ENCODE measurements at regions of chr12 and their contacts with region 1.

Region 1: GRCh38 chr12:96906849-96907670 is at the start of gene NEDD1:
- DNase-seq: peak; percentile 87
- H3K4me3 Mint-ChIP-seq: peak within 1 kb of the TSS; percentile 93
- H3K27ac Mint-ChIP-seq: peak within 1 kb of the TSS; percentile 96
- H3K4me1 Mint-ChIP-seq: peaks cover 39% of the 10 kb centered on the region
- H3K27me3 Mint-ChIP-seq: no peaks in the 10 kb centered on the region
- total RNA-seq, gene NEDD1: 55.4 to 57.9 TPM

Region 2: DNA sequence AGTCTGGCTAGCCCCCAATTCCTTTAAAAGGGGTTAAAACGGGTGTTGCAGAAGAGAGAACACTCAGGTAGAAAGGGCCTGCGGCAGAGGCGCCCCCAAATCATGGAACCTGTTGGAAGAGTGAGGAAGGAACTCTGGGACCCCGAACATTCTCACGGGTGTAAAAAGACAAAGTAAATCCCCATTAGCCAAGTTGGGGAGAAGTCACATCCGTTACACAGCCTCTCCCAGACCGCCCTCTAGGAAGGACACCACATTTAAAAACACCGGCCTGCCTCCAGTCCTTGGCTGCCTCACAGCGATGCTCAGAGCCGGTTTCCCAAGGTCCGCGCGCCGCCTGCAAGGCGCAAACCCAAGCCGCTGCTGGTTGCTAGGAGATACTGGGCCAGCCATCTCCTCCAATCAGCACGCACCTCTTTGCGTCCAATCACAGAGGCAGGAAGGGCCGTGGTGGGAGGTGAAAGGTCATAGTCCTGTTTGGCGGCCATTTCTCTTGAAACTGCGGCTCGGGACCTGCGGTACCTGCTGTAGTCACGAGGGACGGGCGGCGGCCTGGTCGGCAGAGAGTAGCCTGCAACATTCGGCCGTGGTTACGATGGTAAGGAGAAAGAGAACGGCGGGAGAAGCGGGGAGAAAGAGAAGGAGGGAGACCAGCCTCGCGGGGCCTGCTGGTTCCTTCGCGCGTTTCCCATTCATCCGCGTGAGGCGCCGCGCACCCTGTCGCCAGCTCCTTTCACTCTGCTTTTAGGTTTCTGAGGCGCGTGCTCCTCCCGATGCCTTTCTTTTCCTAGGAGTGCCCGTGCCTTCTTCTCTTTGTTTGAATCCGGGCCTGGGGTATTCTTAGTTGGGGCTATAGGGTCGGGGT is 1048.3 kb before region 1 on chr12 and contains the start of gene SNRPF:
- CTCF ChIA-PET with region 1: no interaction called
- POLR2A ChIA-PET with region 1: no interaction called
- intact Hi-C with region 1: loop called (anchors 10 kb)
- DNase-seq: peak; percentile 97
- H3K4me3 Mint-ChIP-seq: no peak within 1 kb of the TSS
- H3K27ac Mint-ChIP-seq: no peak within 1 kb of the TSS
- H3K4me1 Mint-ChIP-seq: peaks cover 38% of the 10 kb centered on the region
- H3K27me3 Mint-ChIP-seq: peaks cover 5% of the 10 kb centered on the region
- total RNA-seq, gene SNRPF: 45.4 to 46.0 TPM

Region 3: DNA sequence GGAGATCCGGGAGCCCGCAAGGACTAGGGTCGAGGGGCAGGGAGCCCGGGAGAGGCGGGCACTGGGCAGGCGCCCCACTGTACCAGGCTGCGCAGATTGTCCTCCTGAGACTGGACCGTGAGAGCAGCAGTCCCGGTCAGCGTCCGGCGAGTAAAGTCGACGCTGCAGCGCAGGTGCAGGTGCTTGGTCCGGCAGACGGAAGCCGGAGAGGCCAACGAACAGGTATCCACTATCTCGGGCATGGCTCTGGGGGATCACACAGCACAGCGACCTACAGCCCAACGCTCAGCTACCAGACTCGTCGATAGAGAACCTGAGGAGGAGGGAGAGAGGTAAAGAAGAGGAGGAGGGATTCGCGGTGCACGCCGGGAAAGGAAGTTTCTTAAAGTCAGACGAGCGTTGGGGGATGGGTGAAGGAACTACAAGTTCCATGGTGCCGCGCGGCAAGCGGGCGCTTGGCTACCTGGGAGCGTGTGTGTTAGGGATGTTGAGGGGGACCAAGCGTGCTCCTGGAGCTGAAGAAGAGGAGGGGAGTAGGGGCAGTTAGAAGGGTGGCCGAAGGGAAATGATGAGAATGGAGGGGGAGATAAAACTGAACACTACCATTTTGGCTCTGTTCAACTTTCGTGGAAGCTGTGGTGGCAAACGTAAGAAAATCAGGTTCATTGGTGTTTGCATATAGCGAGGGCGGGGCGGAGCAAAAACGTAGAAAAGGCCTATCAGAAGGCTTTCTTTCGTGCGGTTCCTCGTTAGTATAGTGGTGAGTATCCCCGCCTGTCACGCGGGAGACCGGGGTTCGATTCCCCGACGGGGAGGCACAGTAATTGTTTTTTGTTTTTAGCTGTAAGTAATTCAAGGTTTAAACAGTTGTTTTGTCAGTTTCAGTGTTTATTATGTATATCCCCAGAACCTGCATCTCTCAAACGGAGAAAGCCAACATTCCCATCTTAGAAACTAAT is 871.5 kb before region 1 on chr12 and contains the start of gene LTA4H:
- CTCF ChIA-PET with region 1: no interaction called
- POLR2A ChIA-PET with region 1: no interaction called
- intact Hi-C with region 1: loop called (anchors 5 kb)
- DNase-seq: peak; percentile 97
- H3K4me3 Mint-ChIP-seq: no peak within 1 kb of the TSS
- H3K27ac Mint-ChIP-seq: no peak within 1 kb of the TSS
- H3K4me1 Mint-ChIP-seq: peaks cover 13% of the 10 kb centered on the region
- H3K27me3 Mint-ChIP-seq: no peaks in the 10 kb centered on the region
- total RNA-seq, gene LTA4H: 106 to 110 TPM

Region 4: DNA sequence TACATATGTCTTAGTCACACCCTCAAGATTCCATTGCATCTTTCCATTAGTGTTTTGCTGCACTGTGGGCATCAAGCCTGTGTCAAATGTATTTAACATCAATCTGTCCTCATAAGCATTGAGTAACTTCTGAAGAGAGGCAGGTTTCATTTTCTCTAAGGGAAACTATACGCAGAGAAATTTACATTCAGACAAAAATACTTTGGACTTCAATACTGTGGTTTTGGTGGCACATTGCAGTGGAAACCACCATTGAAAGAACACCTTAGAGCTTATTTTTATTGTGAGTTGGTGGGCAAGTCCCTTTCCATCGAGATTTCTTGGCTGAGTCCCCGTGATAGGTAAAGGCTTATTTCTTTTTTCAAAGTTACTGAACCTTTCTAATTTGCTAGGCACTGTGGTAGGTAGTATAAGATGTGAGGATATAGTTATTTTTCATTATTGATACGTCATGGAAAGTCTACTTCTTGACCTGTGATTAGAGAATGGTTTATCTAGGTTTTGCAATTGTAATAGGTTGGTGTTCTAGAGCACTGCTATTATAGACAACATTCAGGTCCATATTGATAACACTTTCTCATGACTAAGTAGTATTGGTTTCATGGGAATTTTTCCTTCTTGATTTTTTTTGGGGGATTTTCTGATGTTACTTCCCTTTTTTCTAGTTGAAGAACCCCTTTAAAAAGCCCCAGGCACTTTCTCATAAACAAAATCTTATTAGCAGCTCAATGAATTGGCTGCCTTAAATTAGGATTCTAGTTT is 335.8 kb before region 1 on chr12:
- CTCF ChIA-PET with region 1: no interaction called
- POLR2A ChIA-PET with region 1: no interaction called
- intact Hi-C with region 1: loop called (anchors 2 kb)
- DNase-seq: peak; percentile 33
- H3K4me3 Mint-ChIP-seq: peak overlapping the region; percentile 40
- H3K27ac Mint-ChIP-seq: peak overlapping the region; percentile 65
- H3K4me1 Mint-ChIP-seq: peaks cover 26% of the 10 kb centered on the region
- H3K27me3 Mint-ChIP-seq: peaks cover 4% of the 10 kb centered on the region

Region 5: GRCh38 chr12:96886998-96887677 is 19.9 kb before region 1 on chr12:
- CTCF ChIA-PET with region 1: no interaction called
- POLR2A ChIA-PET with region 1: interaction called, 3 read pairs
- intact Hi-C with region 1: loop called (anchors 2 kb)
- DNase-seq: no peak
- H3K4me3 Mint-ChIP-seq: no peak overlapping the region
- H3K27ac Mint-ChIP-seq: no peak overlapping the region
- H3K4me1 Mint-ChIP-seq: peaks cover 5% of the 10 kb centered on the region
- H3K27me3 Mint-ChIP-seq: peaks cover 10% of the 10 kb centered on the region

Region 6: DNA sequence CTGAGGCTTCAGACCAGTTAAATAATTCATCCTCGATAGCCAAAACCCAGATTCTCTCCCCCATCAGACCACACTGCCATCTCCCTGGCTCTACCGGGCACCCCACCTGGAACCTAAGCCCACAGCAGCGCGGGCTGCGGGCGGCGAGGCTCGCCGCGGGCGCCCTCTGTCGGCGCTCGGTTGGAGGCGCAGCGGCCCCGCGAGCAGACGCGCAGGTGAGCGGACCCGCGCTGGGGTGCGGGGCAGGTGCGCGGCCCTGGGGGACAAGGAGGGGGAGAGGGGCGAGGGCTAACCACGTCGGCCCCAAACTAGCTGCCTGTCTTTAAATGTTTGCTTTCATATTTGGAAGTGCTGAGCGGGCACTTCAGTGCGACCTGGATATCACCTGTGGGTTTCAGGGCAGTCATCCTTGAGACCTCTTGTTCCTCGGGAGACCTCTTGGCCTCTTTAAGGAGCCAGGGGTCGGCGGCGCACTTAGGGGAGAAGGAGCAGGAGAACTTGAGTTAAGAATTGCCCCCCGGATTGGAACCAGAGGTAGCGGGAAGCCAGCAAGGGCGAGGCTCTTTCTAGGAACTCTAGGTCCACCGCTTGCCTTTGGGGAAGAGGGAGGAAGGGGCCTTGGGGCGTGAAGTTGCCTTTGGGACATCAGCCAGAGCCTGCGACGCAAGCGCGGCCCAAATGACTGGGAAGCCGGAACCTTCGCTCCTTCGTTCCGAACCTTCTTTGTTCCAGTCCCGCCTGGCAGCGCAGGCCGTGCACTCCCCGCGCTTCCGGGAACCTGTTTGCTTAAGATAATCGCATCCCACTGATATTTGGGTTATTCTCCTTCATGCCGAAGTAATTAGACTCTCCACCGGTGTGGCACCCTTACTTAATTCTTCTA is 78.7 kb after region 1 on chr12:
- CTCF ChIA-PET with region 1: no interaction called
- POLR2A ChIA-PET with region 1: no interaction called
- intact Hi-C with region 1: loop called (anchors 2 kb)
- DNase-seq: peak; percentile 47
- H3K4me3 Mint-ChIP-seq: peak overlapping the region; percentile 52
- H3K27ac Mint-ChIP-seq: no peak overlapping the region
- H3K4me1 Mint-ChIP-seq: peaks cover 6% of the 10 kb centered on the region
- H3K27me3 Mint-ChIP-seq: peaks cover 11% of the 10 kb centered on the region

Measured in activated CD4-positive, alpha-beta memory T cell treated with anti-CD3 and anti-CD28 coated beads for 36 hours (primary cell).